PC-9 (cell line): ENCODE measurements at regions of chr9 and their contacts with region 1.

Region 1: DNA sequence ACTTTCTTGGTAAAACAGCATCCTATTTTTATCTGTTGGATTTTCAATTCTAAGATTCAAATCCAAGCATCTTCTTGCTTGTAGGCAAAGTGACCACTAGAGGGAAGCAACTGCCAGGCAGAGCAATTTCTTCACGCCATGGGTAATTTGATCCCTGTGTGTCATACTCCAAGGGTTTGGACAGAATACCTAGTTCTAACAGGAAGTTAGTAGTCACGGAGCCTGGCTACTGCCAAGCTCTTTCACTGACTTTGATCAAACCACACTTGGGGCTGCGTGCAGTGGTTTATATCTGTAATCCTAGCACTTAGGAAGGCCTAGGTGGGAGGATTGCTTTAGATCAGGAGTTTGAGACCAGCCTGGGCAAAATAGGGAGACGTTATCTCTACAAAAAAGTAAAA is 473.6 kb upstream of the TNC start:
- DNase-seq: peak; percentile 73 to 91
- H3K4me3 ChIP-seq: no peak overlapping the region
- H3K27ac ChIP-seq: peak overlapping the region; percentile 77
- H3K4me1 ChIP-seq: peaks cover 14% of the 10 kb centered on the region; the same call in 1 of the 2 replicates
- H3K27me3 ChIP-seq: no peaks in the 10 kb centered on the region
- CTCF ChIP-seq: peak; percentile 89

Region 2: GRCh38 chr9:115058684-115059315 is 532.8 kb before region 1 on chr9:
- CTCF ChIA-PET with region 1: no interaction called
- POLR2A ChIA-PET with region 1: interaction called, 22 read pairs
- intact Hi-C with region 1: no loop called
- DNase-seq: peak in 1 of 2 experiments; percentile 63
- H3K4me3 ChIP-seq: no peak overlapping the region
- H3K27ac ChIP-seq: no peak overlapping the region
- H3K4me1 ChIP-seq: peaks cover 16% of the 10 kb centered on the region
- H3K27me3 ChIP-seq: no peaks in the 10 kb centered on the region
- CTCF ChIP-seq: no peak

Region 3: DNA sequence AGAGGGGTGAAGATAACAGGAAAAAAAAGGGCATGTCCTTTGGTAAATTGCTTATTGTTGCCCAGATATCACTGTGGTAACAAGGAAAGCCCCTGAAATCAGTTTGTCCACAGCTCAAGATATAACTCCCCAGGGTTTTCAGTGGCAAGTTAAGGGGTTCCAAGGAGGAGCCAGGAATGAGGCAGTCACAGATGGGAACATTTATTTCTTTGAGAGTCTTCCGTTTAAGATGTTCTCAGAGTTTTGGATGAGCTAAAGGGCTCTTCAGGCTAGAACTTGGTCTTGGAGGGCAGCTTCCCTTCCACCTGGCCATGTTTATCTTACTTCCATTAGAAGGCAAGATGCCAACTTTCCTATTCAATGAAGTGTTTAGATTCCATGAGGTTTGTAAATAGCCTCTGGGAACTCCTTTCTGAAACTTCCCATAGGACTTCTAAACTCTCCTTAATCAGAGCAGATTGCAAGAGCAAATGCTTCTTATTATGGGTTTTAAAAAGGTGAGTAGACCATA is 196.0 kb before region 1 on chr9:
- CTCF ChIA-PET with region 1: no interaction called
- POLR2A ChIA-PET with region 1: no interaction called
- intact Hi-C with region 1: no loop called
- DNase-seq: peak in 1 of 2 experiments; percentile 55
- H3K4me3 ChIP-seq: no peak overlapping the region
- H3K27ac ChIP-seq: no peak overlapping the region
- H3K4me1 ChIP-seq: peaks cover 34% of the 10 kb centered on the region
- H3K27me3 ChIP-seq: no peaks in the 10 kb centered on the region
- CTCF ChIP-seq: no peak

Region 4: DNA sequence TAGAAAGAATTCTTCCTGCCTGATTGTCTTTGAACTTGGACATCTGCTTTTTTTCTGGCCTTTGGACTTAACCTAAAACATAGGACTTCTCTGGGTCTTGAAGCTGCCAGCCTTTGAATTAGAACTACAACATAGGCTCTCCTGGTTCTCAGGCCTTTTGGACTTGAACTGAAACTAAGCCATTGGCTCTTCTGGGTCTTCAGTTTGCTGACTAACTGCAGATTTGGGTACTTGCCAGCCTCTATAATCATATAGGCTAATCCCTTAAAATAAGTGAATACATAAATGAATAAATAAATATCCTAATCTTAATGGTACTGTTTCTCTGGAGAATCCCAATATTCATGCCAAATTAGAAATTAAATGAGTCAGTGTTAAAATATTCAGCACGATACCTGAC is 88.6 kb after region 1 on chr9:
- CTCF ChIA-PET with region 1: no interaction called
- POLR2A ChIA-PET with region 1: no interaction called
- intact Hi-C with region 1: no loop called
- DNase-seq: no peak
- H3K4me3 ChIP-seq: no peak overlapping the region
- H3K27ac ChIP-seq: no peak overlapping the region
- H3K4me1 ChIP-seq: no peaks in the 10 kb centered on the region
- H3K27me3 ChIP-seq: no peaks in the 10 kb centered on the region
- CTCF ChIP-seq: no peak

Region 5: GRCh38 chr9:115786321-115786720 is 194.7 kb after region 1 on chr9:
- CTCF ChIA-PET with region 1: no interaction called
- POLR2A ChIA-PET with region 1: no interaction called
- intact Hi-C with region 1: no loop called
- DNase-seq: no peak
- H3K4me3 ChIP-seq: no peak overlapping the region
- H3K27ac ChIP-seq: no peak overlapping the region
- H3K4me1 ChIP-seq: no peaks in the 10 kb centered on the region
- H3K27me3 ChIP-seq: no peaks in the 10 kb centered on the region
- CTCF ChIP-seq: no peak

Region 6: DNA sequence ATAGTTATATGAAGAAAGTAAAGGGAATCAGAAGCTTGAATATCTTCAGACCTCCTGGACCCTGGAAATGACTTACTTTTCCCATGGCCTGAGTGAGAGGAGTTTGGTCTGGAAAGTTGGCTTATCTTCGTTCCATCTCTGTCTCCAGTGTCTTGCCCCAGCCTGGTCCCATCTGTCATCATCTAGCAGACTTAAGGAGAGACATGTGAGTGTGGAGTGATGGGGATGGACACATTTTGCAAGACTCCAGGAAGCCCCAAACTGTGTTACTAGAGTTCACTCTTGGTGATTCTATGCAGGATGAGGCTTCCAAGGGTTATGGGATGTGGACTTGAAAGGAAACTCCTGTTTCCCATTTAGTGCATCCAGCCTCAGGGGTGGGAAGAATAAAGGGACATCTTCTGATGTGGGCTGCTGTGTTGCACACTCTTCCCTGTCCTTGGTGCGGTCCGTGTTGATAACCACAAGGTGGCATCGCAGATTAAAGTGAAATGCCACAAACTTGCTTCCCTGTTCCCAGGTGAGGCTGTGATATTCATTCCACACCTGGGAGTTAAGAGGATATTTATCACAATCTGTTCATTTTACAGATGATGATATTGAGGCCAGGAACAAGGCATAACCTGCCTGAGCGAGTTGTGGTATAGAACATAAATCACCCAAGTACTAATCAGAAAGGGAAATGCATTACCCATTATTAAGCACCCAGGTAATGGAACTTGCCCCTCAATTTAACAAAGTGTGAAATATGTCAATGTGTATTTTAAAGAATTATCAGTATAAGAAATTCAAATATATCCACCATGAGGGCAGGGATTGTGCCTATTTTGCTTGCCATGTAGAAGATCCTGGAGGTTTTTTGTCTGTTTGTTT is 292.1 kb after region 1 on chr9:
- CTCF ChIA-PET with region 1: interaction called, 12 read pairs
- POLR2A ChIA-PET with region 1: no interaction called
- intact Hi-C with region 1: loop called (anchors 1 kb)
- DNase-seq: peak; percentile 50 to 53
- H3K4me3 ChIP-seq: no peak overlapping the region
- H3K27ac ChIP-seq: no peak overlapping the region
- H3K4me1 ChIP-seq: peaks cover 5% of the 10 kb centered on the region
- H3K27me3 ChIP-seq: no peaks in the 10 kb centered on the region
- CTCF ChIP-seq: peak; percentile 78

Region 7: GRCh38 chr9:116000748-116001329 is 409.3 kb after region 1 on chr9:
- CTCF ChIA-PET with region 1: no interaction called
- POLR2A ChIA-PET with region 1: no interaction called
- intact Hi-C with region 1: loop called (anchors 5 kb)
- DNase-seq: no peak
- H3K4me3 ChIP-seq: no peak overlapping the region
- H3K27ac ChIP-seq: no peak overlapping the region
- H3K4me1 ChIP-seq: peaks cover 69% of the 10 kb centered on the region
- H3K27me3 ChIP-seq: no peaks in the 10 kb centered on the region
- CTCF ChIP-seq: peak; percentile 53; the same call in 1 of the 2 replicates

Region 8: DNA sequence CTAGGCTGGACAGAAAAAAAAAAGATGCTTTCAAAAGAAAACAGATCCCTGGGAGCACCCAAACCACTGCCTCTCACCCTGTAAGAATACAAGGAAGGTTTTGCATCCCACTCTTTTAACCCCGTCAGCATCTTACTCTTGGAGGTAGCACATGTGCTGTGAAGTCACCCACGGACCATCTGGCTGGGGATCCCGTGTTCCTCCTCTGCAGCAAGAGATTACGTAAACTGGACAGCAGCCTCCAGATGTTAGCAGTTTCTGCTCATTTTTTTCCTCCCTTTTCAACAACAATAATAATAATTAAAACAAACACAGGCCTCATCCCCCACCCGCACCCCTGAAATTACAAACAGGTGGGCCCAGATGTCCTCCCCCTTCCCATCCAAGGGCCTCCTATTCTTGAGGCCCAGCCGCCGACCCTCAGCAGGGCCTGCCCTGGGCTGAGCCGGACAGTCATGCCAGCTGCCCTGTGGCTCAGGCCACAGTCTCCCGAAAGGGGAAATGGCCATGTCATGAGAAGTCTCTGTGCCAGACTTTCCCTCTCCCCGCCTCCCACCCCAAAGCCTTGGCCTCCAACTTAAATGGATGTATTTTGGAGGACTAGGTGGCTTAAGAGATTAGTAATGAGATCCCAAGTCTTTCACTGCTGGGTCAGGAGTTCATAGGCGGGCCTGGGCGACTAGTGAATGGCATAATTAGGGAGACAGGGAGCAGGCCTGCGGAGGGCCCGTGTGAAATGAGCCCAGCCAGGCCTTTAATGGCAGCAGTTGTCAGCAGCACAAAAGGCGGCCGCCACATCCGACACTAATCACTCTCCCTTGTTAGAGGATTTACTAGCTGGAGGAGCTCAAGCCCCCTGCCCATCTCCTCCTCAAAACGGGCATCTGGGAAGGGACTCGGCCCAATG is 727.1 kb after region 1 on chr9:
- CTCF ChIA-PET with region 1: no interaction called
- POLR2A ChIA-PET with region 1: no interaction called
- intact Hi-C with region 1: loop called (anchors 10 kb)
- DNase-seq: no peak
- H3K4me3 ChIP-seq: no peak overlapping the region
- H3K27ac ChIP-seq: no peak overlapping the region
- H3K4me1 ChIP-seq: peaks cover 14% of the 10 kb centered on the region
- H3K27me3 ChIP-seq: no peaks in the 10 kb centered on the region
- CTCF ChIP-seq: no peak

Region 9: GRCh38 chr9:116572095-116572748 is 980.6 kb after region 1 on chr9:
- CTCF ChIA-PET with region 1: interaction called, 5 read pairs
- POLR2A ChIA-PET with region 1: no interaction called
- intact Hi-C with region 1: loop called (anchors 1 kb)
- DNase-seq: peak; percentile 57 to 75
- H3K4me3 ChIP-seq: no peak overlapping the region
- H3K27ac ChIP-seq: no peak overlapping the region
- H3K4me1 ChIP-seq: peaks cover 15% of the 10 kb centered on the region; the same call in 1 of the 2 replicates
- H3K27me3 ChIP-seq: no peaks in the 10 kb centered on the region
- CTCF ChIP-seq: peak; percentile 94

Region 10: DNA sequence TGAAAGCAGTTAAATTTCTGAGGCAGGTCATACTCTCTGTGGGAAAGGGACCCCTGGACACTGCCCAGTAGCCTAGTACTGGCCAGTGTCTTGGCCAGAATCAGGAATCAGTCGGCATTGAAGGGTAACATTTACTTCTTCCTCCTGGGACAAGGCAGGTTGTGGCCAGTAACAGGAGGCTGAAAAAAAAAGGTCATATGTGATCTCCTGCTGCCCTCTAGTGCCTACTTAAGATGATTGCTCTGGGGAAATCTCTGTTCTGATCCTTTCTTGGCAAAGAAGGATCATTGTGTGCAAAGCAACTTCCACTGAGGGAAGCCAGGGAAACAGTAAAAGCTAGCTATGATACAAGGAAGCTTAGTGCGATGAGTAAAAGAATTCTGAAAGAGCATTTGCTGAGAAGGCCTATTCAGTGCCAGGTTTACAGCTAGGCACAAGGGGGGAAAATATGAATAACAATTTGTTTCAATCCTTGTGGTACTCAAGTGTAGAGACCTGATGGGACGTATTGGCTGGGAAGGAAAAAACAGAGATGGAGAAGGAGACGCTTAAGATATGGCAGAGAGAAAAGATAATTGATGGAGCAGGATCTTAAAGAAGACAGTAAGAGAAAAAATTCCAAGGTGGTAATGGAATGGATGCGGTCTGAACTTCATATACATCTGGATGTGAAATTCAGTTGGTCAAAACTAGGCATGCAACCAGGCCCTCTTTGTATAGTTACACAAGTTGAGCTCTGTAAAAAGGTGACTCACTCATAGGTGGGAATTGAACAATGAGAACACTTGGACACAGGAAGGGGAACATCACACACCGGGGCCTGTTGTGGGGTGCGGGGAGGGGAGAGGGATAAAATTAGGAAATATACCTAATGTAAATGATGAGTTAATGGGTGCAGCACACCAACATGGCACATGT is 1069.7 kb after region 1 on chr9:
- CTCF ChIA-PET with region 1: interaction called, 4 read pairs
- POLR2A ChIA-PET with region 1: no interaction called
- intact Hi-C with region 1: loop called (anchors 1 kb)
- DNase-seq: peak; percentile 35 to 60
- H3K4me3 ChIP-seq: no peak overlapping the region
- H3K27ac ChIP-seq: no peak overlapping the region
- H3K4me1 ChIP-seq: no peaks in the 10 kb centered on the region
- H3K27me3 ChIP-seq: no peaks in the 10 kb centered on the region
- CTCF ChIP-seq: peak; percentile 84